B cell (primary cell): ENCODE measurements at regions of chr6 and their contacts with region 1.

Region 1: DNA sequence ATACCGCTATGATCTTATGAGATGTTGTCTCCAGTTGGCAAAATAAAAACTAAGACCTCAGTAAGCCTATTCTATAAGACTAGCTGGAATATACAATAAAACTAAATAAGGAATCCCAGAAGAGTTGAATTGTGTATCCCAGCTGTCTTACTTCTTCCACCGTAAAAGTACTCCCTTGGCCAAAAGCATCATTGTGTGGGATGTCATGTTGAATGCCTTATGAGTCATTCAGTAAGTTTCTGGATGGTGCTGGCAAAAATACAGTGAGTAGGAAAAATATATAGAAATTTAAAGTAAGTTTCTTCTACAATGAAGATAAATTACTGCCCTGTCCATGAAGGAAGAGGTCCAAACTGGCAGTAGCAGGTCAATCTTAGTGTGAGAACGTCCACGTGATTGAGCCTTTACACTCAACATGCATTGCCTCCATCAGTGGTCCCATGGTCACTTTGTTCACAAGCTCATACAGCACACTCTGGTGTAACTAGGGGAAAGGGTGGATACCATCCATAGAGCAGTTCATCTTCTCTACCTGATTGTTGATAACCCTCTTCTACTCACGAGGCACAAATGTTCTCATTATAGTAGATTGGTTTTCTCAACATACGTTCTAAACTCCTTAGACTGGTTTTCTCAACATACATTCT is 13.7 kb upstream of the ZNF318 start:
- DNase-seq: no peak
- ATAC-seq: no peak
- H3K4me3 ChIP-seq: peak overlapping the region in 2 of 5 experiments; percentile 18 to 42
- H3K4me3 Mint-ChIP-seq: peak overlapping the region; percentile 85
- H3K27ac ChIP-seq: peak overlapping the region; percentile 91 to 94
- H3K27ac Mint-ChIP-seq: peak overlapping the region; percentile 98
- H3K4me1 ChIP-seq: peaks cover 68 to 73% of the 10 kb centered on the region in 2 donors
- H3K4me1 Mint-ChIP-seq: peaks cover 67% of the 10 kb centered on the region
- H3K27me3 ChIP-seq: peaks cover 0 to 4% (median 2%) of the 10 kb centered on the region in 4 experiments
- H3K27me3 Mint-ChIP-seq: peaks cover 12% of the 10 kb centered on the region
- CTCF ChIP-seq: no peak

Region 2: DNA sequence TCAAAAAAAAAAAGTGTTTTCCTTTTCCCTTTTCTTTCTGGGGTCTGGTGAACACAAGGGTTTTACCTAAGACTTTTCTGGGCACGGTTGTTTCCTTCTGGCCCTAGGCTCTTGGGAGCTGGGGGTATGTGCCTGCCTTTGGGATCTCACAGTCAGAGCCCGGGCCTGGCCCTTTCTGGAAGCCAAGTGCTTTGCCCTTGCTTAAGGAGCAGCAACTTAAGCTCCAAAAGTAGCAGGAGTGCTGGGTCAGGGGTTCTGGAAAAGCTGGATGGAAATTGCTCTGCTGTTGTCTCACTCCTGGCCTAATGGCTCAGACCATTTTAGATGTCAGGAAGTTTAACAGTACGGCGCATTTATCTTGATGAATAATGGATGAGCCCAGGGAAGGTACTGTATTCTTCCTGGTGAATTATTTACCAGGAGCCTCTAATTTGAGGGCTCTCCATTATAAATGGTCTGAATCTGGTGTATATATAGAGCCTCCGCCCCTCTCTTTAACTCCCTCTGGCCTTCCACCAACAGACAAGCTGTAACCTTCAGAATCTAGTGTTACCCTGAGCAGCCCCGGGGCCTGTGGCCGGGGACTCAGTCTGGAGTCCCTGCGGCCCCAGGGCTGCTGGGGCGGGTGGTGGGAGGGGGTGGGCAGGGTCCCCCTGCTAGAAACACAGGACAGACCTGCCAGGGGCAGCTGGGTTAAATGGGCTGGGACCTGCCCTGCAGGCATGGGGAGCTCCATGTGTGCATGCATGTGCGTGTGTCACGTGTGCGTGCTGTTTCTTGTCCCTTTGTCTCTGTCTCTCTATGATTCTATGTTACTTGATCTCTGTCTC is 269.5 kb before region 1 on chr6:
- CTCF ChIA-PET with region 1: no interaction called
- POLR2A ChIA-PET with region 1: no interaction called
- intact Hi-C with region 1: no loop called
- DNase-seq: no peak
- ATAC-seq: no peak
- H3K4me3 ChIP-seq: no peak overlapping the region
- H3K4me3 Mint-ChIP-seq: no peak overlapping the region
- H3K27ac ChIP-seq: no peak overlapping the region
- H3K27ac Mint-ChIP-seq: no peak overlapping the region
- H3K4me1 ChIP-seq: no peaks in the 10 kb centered on the region
- H3K4me1 Mint-ChIP-seq: no peaks in the 10 kb centered on the region
- H3K27me3 ChIP-seq: no peaks in the 10 kb centered on the region
- H3K27me3 Mint-ChIP-seq: no peaks in the 10 kb centered on the region
- CTCF ChIP-seq: no peak

Region 3: DNA sequence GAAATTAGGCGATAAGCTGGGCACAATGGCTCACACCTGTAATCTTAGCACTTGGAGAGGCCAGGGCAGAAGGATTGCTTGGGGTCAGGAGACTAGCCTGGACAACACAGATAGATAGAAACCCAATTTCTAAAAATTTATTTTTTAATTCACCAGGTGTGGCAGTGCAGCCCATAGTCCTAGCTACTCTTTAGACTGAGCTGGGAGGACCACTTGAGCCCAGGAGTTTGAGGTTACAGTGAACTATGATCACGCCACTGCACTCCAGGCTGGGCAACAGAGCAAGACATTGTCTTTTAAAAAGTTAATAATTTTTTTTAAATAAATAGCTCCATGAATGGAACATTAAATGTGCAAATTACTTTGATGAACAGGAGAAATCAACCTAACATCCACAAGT is 21.9 kb before region 1 on chr6:
- CTCF ChIA-PET with region 1: interaction called, 54 read pairs
- POLR2A ChIA-PET with region 1: interaction called, 56 read pairs
- intact Hi-C with region 1: no loop called
- DNase-seq: no peak
- ATAC-seq: peak; percentile 41
- H3K4me3 ChIP-seq: no peak overlapping the region
- H3K4me3 Mint-ChIP-seq: no peak overlapping the region
- H3K27ac ChIP-seq: peak overlapping the region in 1 of 2 donors; percentile 41
- H3K27ac Mint-ChIP-seq: peak overlapping the region; percentile 20
- H3K4me1 ChIP-seq: peaks cover 32 to 36% of the 10 kb centered on the region in 2 donors
- H3K4me1 Mint-ChIP-seq: peaks cover 50% of the 10 kb centered on the region
- H3K27me3 ChIP-seq: no peaks in the 10 kb centered on the region
- H3K27me3 Mint-ChIP-seq: no peaks in the 10 kb centered on the region
- CTCF ChIP-seq: no peak